Activated naive CD4-positive, alpha-beta T cell treated with anti-CD3 and anti-CD28 coated beads for 36 hours (primary cell): ENCODE measurements at regions of chr13 and their contacts with region 1.

Region 1: GRCh38 chr13:42392716-42393572 is 121.0 kb downstream of the AKAP11 start:
- DNase-seq: peak; percentile 58
- H3K4me3 Mint-ChIP-seq: peak overlapping the region; percentile 84
- H3K27ac Mint-ChIP-seq: peak overlapping the region; percentile 100
- H3K4me1 Mint-ChIP-seq: peaks cover 74% of the 10 kb centered on the region
- H3K27me3 Mint-ChIP-seq: no peaks in the 10 kb centered on the region

Region 2: GRCh38 chr13:41465241-41465847 is 927.6 kb before region 1 on chr13:
- CTCF ChIA-PET with region 1: no interaction called
- intact Hi-C with region 1: loop called (anchors 10 kb)
- DNase-seq: peak; percentile 97
- H3K4me3 Mint-ChIP-seq: peak overlapping the region; percentile 76
- H3K27ac Mint-ChIP-seq: peak overlapping the region; percentile 93
- H3K4me1 Mint-ChIP-seq: peaks cover 89% of the 10 kb centered on the region
- H3K27me3 Mint-ChIP-seq: no peaks in the 10 kb centered on the region

Region 3: DNA sequence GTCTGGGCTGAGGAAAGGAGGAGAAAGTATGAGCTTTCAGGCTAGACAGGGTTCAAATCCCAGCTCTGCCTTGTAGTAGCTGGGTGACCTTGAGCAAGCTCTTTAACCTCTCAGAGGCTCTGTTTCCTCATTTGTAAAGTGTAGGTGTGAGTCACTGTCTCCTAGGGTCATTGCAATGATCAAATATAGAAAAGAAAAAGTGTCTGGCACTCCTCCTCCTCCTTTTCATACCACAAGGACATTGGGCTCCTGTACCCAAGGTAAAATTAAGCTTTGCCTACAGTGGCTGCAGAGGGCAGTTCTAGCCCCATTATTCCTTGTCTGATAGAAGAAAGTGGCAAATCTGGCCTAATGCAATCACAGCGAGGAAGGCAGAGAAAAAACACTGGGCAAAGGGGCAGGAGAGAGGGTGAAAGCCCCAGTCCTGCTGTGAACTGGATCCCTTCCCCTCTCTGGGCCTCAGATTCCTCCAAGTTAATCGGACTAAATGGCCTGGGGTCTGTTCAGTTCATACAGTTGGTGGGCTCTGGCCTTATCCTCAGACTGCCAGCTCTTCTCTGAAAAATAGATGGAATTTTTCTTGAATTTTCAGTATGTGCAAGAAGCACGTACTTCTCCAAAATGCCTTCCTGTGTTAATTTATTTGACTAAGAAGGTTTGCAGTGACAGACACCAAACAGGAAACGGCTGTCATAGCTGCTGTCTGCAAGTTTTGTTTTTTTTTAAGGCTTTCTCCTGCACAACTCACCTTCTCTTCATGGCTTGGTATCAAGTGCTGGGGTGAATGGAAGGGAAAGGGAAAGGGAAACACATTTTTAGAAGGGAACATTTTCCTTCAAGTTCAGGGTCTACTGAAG is 900.3 kb before region 1 on chr13:
- CTCF ChIA-PET with region 1: no interaction called
- intact Hi-C with region 1: loop called (anchors 1 kb)
- DNase-seq: peak; percentile 62
- H3K4me3 Mint-ChIP-seq: peak overlapping the region; percentile 45
- H3K27ac Mint-ChIP-seq: peak overlapping the region; percentile 95
- H3K4me1 Mint-ChIP-seq: peaks cover 91% of the 10 kb centered on the region
- H3K27me3 Mint-ChIP-seq: no peaks in the 10 kb centered on the region

Region 4: GRCh38 chr13:42039946-42040729 is 352.8 kb before region 1 on chr13:
- CTCF ChIA-PET with region 1: no interaction called
- intact Hi-C with region 1: loop called (anchors 10 kb)
- DNase-seq: peak; percentile 86
- H3K4me3 Mint-ChIP-seq: peak overlapping the region; percentile 78
- H3K27ac Mint-ChIP-seq: peak overlapping the region; percentile 73
- H3K4me1 Mint-ChIP-seq: peaks cover 20% of the 10 kb centered on the region
- H3K27me3 Mint-ChIP-seq: no peaks in the 10 kb centered on the region

Region 5: DNA sequence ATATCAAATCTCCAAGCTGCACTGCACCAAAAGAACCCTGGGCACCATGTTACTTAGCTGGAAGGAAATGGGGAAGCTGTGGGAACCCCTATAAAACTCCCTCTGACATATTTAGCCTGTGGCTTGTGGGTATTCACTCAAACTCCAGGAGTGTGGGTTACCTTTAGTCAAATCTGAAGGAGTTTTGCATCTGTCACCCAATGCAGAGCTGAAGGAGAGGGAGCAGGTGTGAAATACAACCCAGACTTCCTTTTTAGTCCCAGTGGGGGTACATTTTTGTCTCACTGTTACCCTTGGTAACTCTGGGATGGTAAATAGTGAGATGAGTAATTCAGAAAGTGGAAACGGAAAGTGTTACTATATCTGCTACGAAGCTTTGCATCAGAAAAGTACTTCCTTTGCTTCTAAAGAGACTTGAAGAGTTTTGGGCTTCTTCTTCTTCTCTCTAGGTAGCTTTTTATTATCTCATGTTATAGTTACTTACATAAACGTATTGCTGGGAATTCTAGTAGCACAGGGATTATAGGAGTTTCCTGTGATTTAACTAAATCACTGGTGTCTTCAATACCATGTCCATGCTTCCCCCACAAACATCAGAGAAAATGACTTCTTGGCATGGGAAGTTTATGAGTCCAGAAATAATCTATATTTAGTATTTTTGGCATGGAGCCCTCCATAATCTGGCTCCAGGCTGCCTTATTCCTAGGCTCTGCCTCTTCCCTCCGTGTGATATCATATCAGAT is 15.1 kb before region 1 on chr13:
- CTCF ChIA-PET with region 1: interaction called, 9 read pairs
- intact Hi-C with region 1: loop called (anchors 1 kb)
- DNase-seq: peak; percentile 71
- H3K4me3 Mint-ChIP-seq: no peak overlapping the region
- H3K27ac Mint-ChIP-seq: peak overlapping the region; percentile 95
- H3K4me1 Mint-ChIP-seq: peaks cover 59% of the 10 kb centered on the region
- H3K27me3 Mint-ChIP-seq: no peaks in the 10 kb centered on the region

Region 6: GRCh38 chr13:42405665-42406390 is 12.9 kb after region 1 on chr13:
- CTCF ChIA-PET with region 1: interaction called, 8 read pairs
- intact Hi-C with region 1: loop called (anchors 1 kb)
- DNase-seq: peak; percentile 87
- H3K4me3 Mint-ChIP-seq: peak overlapping the region; percentile 51
- H3K27ac Mint-ChIP-seq: peak overlapping the region; percentile 96
- H3K4me1 Mint-ChIP-seq: peaks cover 41% of the 10 kb centered on the region
- H3K27me3 Mint-ChIP-seq: no peaks in the 10 kb centered on the region

Region 7: DNA sequence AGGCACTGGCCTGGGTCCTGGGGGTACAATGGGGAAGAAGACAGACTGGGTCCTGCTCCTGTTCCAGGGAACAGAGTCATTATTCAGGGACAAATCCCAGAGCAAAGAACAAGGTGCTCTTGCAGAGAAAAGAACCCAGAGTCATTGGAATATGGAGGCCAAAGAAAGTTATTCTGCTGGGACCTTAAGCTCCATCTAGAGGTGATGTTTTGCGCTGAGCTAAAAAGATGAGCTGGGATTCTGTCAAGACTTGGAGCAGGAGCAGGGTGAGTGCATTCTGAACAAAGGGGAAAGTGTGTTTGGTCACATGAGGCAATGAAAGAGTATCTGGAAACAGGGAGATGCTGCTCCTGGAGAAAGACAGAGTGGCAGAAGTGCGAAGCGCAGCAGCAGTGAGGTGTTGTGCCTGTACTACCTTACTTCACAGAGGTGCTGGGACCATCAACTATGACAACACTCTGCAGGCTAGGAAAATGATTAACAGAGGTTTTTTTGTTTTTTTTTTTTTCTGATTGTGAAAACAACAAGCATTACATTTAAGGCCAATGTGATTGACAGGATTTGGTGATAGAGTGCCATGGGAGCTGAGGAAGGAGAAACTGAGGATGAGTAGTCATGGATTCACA is 85.7 kb after region 1 on chr13:
- CTCF ChIA-PET with region 1: no interaction called
- intact Hi-C with region 1: loop called (anchors 5 kb)
- DNase-seq: no peak
- H3K4me3 Mint-ChIP-seq: no peak overlapping the region
- H3K27ac Mint-ChIP-seq: no peak overlapping the region
- H3K4me1 Mint-ChIP-seq: peaks cover 17% of the 10 kb centered on the region
- H3K27me3 Mint-ChIP-seq: no peaks in the 10 kb centered on the region